ENCODE measurements at regions of chr19 and their contacts with region 1.

Region 1: GRCh38 chr19:46748325-46749109 is 2.3 kb upstream of the STRN4 start:
- DNase-seq: peak; percentile 75
- H3K4me3 ChIP-seq: no peak overlapping the region; a peak in 1 of 4 replicates
- H3K27ac ChIP-seq: no peak overlapping the region
- H3K4me1 ChIP-seq: peaks cover 0 to 17% of the 10 kb centered on the region in 2 experiments; a peak in 1 of 4 replicates
- H3K27me3 ChIP-seq: no peaks in the 10 kb centered on the region
- CTCF ChIP-seq: peak; percentile 89
- EP300 ChIP-seq: no peak
- RAD21 ChIP-seq: peak; percentile 30; the same call in 1 of the 2 replicates

Region 2: DNA sequence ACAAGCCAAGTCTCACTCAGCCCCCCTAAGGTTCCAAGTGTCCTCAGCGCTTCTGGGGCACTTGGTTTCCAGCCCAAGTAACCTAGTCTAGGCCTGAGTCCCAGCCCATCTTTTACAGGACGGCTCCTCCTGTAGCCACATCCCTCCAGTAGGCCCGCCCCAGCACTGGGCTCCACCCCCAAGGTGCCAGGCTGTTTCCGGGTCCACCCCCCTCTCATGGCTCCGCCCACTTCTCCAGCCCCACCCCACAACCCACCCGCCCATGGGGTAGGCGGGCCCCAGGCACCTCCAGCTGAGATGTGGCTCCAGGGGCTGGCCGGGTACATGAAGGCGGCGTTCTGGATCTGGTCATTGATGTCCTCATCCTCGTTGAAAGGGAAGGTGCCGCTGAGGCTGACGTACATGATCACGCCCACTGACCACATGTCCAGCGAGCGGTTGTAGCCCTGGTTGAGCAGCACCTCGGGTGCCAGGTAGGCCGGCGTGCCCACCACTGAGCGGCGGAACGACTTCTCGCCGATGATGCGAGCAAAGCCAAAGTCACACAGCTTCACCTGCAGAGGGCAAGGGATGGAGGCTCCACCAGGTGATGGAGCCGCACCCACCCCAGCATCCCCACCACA is 70.3 kb before region 1 on chr19:
- CTCF ChIA-PET with region 1: no interaction called
- POLR2A ChIA-PET with region 1: no interaction called
- DNase-seq: peak; percentile 89
- H3K4me3 ChIP-seq: no peak overlapping the region
- H3K27ac ChIP-seq: no peak overlapping the region
- H3K4me1 ChIP-seq: no peaks in the 10 kb centered on the region
- H3K27me3 ChIP-seq: no peaks in the 10 kb centered on the region
- CTCF ChIP-seq: no peak
- EP300 ChIP-seq: no peak
- RAD21 ChIP-seq: no peak

Region 3: GRCh38 chr19:46834121-46834520 is 85.6 kb after region 1 on chr19:
- CTCF ChIA-PET with region 1: interaction called, 170 read pairs
- POLR2A ChIA-PET with region 1: interaction called, 3 read pairs
- DNase-seq: peak; percentile 74
- H3K4me3 ChIP-seq: no peak overlapping the region
- H3K27ac ChIP-seq: peak overlapping the region in 1 of 2 experiments; percentile 56; a peak in 3 of 4 replicates
- H3K4me1 ChIP-seq: peaks cover 3% of the 10 kb centered on the region in 2 experiments; a peak in 1 of 4 replicates
- H3K27me3 ChIP-seq: no peaks in the 10 kb centered on the region
- CTCF ChIP-seq: no peak
- EP300 ChIP-seq: peak in 1 of 2 experiments; percentile 85; a peak in 2 of 4 replicates
- RAD21 ChIP-seq: no peak